ENCODE measurements at regions of chr6 and their contacts with region 1.

Region 1: DNA sequence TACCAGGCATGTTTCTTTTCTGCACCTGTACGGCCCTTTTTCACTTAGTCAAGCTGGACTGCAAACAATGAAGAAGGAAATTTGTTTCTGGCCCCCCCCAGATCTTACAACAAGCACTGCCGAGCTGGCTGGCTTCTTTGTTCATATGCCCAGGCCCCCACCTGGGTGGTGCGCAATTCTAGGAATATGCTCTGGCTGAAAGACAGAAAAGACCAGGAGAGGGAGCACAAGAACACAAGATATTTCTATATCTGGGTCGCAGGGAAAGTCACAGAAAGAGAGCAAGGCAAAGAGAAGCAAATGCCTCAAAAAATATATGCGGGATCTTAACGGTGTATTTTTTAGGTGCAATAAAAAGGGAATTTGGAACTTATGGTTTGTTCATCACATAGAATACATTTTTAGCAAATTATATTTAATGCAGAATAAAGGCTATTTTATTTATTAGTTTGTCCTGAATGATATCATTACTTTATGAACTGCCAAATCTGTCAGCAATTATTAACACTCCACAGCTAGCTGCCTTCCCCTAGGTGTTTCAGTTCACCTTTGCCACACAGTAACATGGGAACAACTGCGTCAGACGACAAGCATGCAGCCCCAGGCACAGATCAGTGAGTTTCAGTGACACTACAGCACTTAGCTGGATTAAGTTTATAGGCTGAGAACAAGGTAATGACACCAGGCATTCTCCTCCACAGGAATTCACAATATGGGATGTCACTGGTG is 76.5 kb downstream of the GJA10 start:
- DNase-seq: peak; percentile 62 to 74 (median 72)
- H3K4me3 ChIP-seq: no peak overlapping the region
- H3K27ac ChIP-seq: no peak overlapping the region
- H3K4me1 ChIP-seq: no peaks in the 10 kb centered on the region
- H3K27me3 ChIP-seq: no peaks in the 10 kb centered on the region

Region 2: DNA sequence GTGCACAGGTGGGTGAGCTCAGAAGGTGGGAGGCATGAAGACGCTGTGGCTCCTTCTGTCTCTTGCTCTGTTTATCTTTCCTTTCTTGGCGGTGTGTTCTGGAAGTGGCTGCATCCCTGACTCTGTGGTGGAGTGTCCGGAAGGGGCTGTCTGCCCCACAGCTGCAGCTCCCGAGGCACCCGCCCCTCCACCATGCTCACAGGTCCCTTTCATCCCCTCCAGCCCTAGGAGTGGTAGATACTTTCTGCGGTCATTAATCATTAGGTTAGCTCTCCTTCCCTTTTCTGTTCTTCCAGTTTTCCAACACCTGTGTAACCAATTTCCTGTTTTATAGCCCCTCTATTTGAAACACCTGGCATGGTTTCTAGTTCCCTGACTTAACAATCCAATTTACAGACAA is 10.9 kb before region 1 on chr6:
- CTCF ChIA-PET with region 1: interaction called, 11 read pairs
- POLR2A ChIA-PET with region 1: no interaction called
- DNase-seq: no peak
- H3K4me3 ChIP-seq: no peak overlapping the region
- H3K27ac ChIP-seq: no peak overlapping the region
- H3K4me1 ChIP-seq: peaks cover 0 to 6% (median 1%) of the 10 kb centered on the region in 4 experiments
- H3K27me3 ChIP-seq: no peaks in the 10 kb centered on the region

Region 3: GRCh38 chr6:90095788-90096187 is 125.0 kb after region 1 on chr6:
- CTCF ChIA-PET with region 1: no interaction called
- POLR2A ChIA-PET with region 1: no interaction called
- DNase-seq: no peak
- H3K4me3 ChIP-seq: no peak overlapping the region
- H3K27ac ChIP-seq: no peak overlapping the region
- H3K4me1 ChIP-seq: peaks cover 0 to 6% (median 4%) of the 10 kb centered on the region in 4 experiments
- H3K27me3 ChIP-seq: no peaks in the 10 kb centered on the region

Region 4: GRCh38 chr6:90197854-90198496 is 227.2 kb after region 1 on chr6:
- CTCF ChIA-PET with region 1: no interaction called
- POLR2A ChIA-PET with region 1: no interaction called
- DNase-seq: peak in 2 of 3 donors; percentile 52 to 65
- H3K4me3 ChIP-seq: no peak overlapping the region
- H3K27ac ChIP-seq: no peak overlapping the region
- H3K4me1 ChIP-seq: peaks cover 0 to 17% (median 4%) of the 10 kb centered on the region in 4 experiments
- H3K27me3 ChIP-seq: no peaks in the 10 kb centered on the region

Region 5: GRCh38 chr6:90478789-90479602 is 508.2 kb after region 1 on chr6:
- CTCF ChIA-PET with region 1: interaction called, 52 read pairs
- POLR2A ChIA-PET with region 1: no interaction called
- DNase-seq: peak; percentile 90 to 95 (median 94)
- H3K4me3 ChIP-seq: no peak overlapping the region
- H3K27ac ChIP-seq: no peak overlapping the region
- H3K4me1 ChIP-seq: peaks cover 0 to 7% (median 4%) of the 10 kb centered on the region in 4 experiments
- H3K27me3 ChIP-seq: no peaks in the 10 kb centered on the region

Measured in common myeloid progenitor, CD34-positive (primary cell).